HEK293T (cell line): ENCODE measurements at regions of chr4 and their contacts with region 1.

Region 1: DNA sequence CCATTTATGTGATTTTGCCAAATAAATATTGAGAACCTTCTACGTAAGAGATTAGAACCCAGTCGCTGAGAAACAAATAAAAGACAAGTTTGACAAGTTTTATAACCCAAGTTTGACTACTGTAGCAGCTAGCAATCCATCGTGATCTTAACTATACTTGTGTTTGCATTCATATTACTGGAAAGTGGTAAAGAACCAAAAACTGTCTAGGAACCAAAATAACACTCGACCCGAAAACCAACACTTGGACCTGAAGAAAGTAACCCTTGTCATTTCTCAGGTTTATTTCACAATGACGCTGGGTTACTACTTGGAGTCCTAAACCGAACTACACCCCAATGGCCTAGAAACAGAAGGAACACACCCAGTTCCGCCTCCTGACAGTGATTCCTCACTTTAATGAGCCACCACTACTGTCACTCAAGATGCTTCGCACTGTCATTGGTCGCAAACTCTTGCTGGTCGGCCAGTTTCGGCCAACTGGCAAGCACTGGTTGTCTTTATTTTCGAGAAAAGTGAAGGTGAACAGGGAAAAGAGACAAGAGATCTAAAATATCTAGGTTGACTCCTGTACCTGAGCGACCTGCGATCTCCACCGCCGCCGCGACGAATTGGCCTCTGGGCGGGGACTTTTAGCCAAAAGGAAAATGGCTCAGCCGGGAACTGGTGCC is 496 bp downstream of the FBXO8 start:
- DNase-seq: peak; percentile 81

Region 2: GRCh38 chr4:174265916-174266315 is 17.1 kb before region 1 on chr4:
- CTCF ChIA-PET with region 1: interaction called, 3 read pairs
- POLR2A ChIA-PET with region 1: interaction called, 16 read pairs
- DNase-seq: no peak